Endothelial cell of umbilical vein (primary cell): ENCODE measurements at regions of chr2 and their contacts with region 1.

Region 1: GRCh38 chr2:41400088-41400665 is 647.6 kb upstream of the PKDCC start:
- DNase-seq: peak; percentile 62
- H3K4me3 ChIP-seq: no peak overlapping the region
- H3K27ac ChIP-seq: no peak overlapping the region
- H3K4me1 ChIP-seq: no peaks in the 10 kb centered on the region
- H3K27me3 ChIP-seq: no peaks in the 10 kb centered on the region
- CTCF ChIP-seq: peak; percentile 32 to 59
- POLR2A ChIP-seq: no peak

Region 2: GRCh38 chr2:40809156-40809555 is 591.0 kb before region 1 on chr2:
- CTCF ChIA-PET with region 1: no interaction called
- POLR2A ChIA-PET with region 1: no interaction called
- dilution Hi-C with region 1: no loop called
- intact Hi-C with region 1: loop called (anchors 5 kb)
- DNase-seq: no peak
- H3K4me3 ChIP-seq: no peak overlapping the region
- H3K27ac ChIP-seq: no peak overlapping the region
- H3K4me1 ChIP-seq: no peaks in the 10 kb centered on the region
- H3K27me3 ChIP-seq: no peaks in the 10 kb centered on the region
- CTCF ChIP-seq: no peak
- POLR2A ChIP-seq: no peak

Region 3: GRCh38 chr2:40844353-40845277 is 555.6 kb before region 1 on chr2:
- CTCF ChIA-PET with region 1: interaction called, 22 read pairs
- POLR2A ChIA-PET with region 1: no interaction called
- dilution Hi-C with region 1: no loop called
- intact Hi-C with region 1: loop called (anchors 1 kb)
- DNase-seq: no peak
- H3K4me3 ChIP-seq: no peak overlapping the region
- H3K27ac ChIP-seq: no peak overlapping the region
- H3K4me1 ChIP-seq: no peaks in the 10 kb centered on the region
- H3K27me3 ChIP-seq: no peaks in the 10 kb centered on the region
- CTCF ChIP-seq: no peak
- POLR2A ChIP-seq: no peak

Region 4: DNA sequence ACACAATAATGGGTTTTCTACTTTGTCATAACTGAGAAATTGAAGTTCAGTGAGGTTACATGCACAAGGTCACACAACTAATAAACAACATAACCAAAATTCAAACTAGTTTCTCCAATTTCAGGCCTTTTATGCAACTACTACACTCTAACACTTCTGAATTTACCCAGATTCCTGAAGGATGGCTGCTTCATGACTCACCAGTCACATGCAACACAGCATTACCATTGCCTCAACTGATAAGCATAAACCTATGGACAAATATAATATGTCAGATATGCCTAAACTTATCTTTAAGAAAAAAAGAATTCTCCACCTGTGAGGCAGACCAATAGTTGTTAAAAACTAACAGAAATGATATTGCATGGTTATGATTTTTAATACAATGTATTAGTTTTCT is 361.8 kb before region 1 on chr2:
- CTCF ChIA-PET with region 1: no interaction called
- POLR2A ChIA-PET with region 1: no interaction called
- dilution Hi-C with region 1: no loop called
- intact Hi-C with region 1: loop called (anchors 10 kb)
- DNase-seq: peak; percentile 39
- H3K4me3 ChIP-seq: no peak overlapping the region
- H3K27ac ChIP-seq: no peak overlapping the region
- H3K4me1 ChIP-seq: no peaks in the 10 kb centered on the region
- H3K27me3 ChIP-seq: no peaks in the 10 kb centered on the region
- CTCF ChIP-seq: no peak
- POLR2A ChIP-seq: no peak

Region 5: GRCh38 chr2:41241325-41242000 is 158.7 kb before region 1 on chr2:
- CTCF ChIA-PET with region 1: no interaction called
- POLR2A ChIA-PET with region 1: no interaction called
- dilution Hi-C with region 1: no loop called
- intact Hi-C with region 1: no loop called
- DNase-seq: no peak
- H3K4me3 ChIP-seq: no peak overlapping the region
- H3K27ac ChIP-seq: no peak overlapping the region
- H3K4me1 ChIP-seq: peaks cover 17% of the 10 kb centered on the region
- H3K27me3 ChIP-seq: no peaks in the 10 kb centered on the region
- CTCF ChIP-seq: no peak
- POLR2A ChIP-seq: no peak

Region 6: DNA sequence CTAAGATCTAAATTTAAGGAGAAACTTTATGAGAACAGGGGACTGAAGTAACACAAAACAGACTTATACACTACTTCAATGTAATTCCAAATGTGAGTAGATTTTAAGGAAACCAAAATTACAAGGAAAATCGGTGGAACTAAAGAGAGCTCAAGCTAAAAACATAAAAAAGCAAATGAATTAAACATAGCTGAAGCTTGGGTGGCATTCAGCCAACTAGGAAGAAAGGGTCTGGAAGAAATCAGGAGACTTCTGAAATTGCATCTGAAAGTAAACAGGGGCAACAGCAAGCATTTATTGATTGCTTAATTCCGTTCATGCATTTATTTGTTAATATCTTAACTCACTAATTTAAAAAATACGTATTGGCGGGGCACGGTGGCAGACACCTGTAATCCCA is 79.7 kb before region 1 on chr2:
- CTCF ChIA-PET with region 1: no interaction called
- POLR2A ChIA-PET with region 1: no interaction called
- dilution Hi-C with region 1: no loop called
- intact Hi-C with region 1: no loop called
- DNase-seq: no peak
- H3K4me3 ChIP-seq: no peak overlapping the region
- H3K27ac ChIP-seq: no peak overlapping the region
- H3K4me1 ChIP-seq: no peaks in the 10 kb centered on the region
- H3K27me3 ChIP-seq: no peaks in the 10 kb centered on the region
- CTCF ChIP-seq: no peak
- POLR2A ChIP-seq: no peak